Mammary epithelial cell (primary cell): ENCODE measurements at regions of chr15 and their contacts with region 1.

Region 1: GRCh38 chr15:33492434-33493052 is 181.8 kb downstream of the RYR3 start:
- DNase-seq: no peak
- H3K4me3 ChIP-seq: no peak overlapping the region
- H3K27ac ChIP-seq: no peak overlapping the region
- H3K4me1 ChIP-seq: peaks cover 1% of the 10 kb centered on the region
- H3K27me3 ChIP-seq: peaks cover 2% of the 10 kb centered on the region
- CTCF ChIP-seq: no peak

Region 2: DNA sequence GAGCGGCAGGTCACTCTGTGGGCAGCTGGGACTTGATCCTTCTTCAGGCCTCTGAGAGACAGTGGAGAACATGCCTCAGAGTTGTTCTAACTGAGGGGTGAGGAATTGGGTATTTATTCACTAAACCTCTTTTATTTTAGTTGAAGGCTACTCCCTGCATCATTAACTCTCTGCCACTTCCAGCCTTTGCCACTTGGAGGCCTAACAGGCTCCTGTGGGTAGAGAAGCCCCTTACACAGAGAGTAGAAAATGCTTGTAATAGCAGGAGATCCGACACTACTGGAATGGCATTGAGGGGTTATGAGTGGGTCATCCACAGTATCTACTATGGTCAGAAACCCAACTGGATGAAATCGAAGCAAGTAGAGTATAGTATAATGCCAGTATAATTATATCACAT is 100.1 kb before region 1 on chr15:
- CTCF ChIA-PET with region 1: no interaction called
- dilution Hi-C with region 1: loop called (anchors 5 kb)
- in situ Hi-C with region 1: no loop called
- intact Hi-C with region 1: no loop called
- DNase-seq: no peak
- H3K4me3 ChIP-seq: no peak overlapping the region
- H3K27ac ChIP-seq: no peak overlapping the region
- H3K4me1 ChIP-seq: no peaks in the 10 kb centered on the region
- H3K27me3 ChIP-seq: no peaks in the 10 kb centered on the region
- CTCF ChIP-seq: no peak

Region 3: DNA sequence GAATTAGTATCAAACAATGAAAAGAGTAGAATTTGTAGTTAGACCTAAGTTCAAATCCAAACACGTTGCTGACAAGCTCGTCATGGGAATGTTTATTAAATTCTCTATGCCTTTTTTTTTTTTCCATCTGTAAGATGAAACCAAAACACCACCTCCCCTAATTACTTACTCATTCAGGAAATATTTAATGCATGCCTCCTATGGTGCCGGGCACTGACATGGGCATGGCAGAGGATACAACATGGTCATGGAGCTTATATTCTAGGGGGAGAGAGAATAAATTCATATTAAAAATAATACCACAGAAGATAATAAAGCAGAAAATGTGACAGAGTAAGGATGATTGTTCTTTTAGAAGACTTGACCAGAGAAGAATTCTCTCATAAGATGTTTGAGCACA is 34.0 kb after region 1 on chr15:
- CTCF ChIA-PET with region 1: no interaction called
- dilution Hi-C with region 1: loop called (anchors 5 kb)
- in situ Hi-C with region 1: no loop called
- intact Hi-C with region 1: no loop called
- DNase-seq: no peak
- H3K4me3 ChIP-seq: no peak overlapping the region
- H3K27ac ChIP-seq: no peak overlapping the region
- H3K4me1 ChIP-seq: no peaks in the 10 kb centered on the region
- H3K27me3 ChIP-seq: no peaks in the 10 kb centered on the region
- CTCF ChIP-seq: no peak

Region 4: DNA sequence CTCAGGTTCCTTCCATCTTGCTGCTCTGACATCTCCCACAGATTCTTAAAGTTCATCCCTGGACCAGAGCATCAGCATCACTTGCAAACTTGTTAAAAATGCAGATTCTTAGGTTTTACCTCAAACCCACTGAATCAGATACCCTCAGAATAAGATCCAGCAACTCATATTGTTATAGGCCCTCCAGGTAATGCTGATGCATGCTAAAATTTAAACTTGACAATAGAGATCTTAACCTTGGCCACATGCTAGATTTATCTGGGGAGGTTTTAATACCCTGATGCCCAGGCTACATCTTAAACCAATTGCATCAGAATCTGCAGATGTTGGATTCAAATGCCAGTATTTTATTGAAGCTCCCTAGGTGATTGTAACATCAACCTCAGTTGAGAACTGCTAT is 75.1 kb after region 1 on chr15:
- CTCF ChIA-PET with region 1: no interaction called
- dilution Hi-C with region 1: no loop called
- in situ Hi-C with region 1: no loop called
- intact Hi-C with region 1: no loop called
- DNase-seq: no peak
- H3K4me3 ChIP-seq: no peak overlapping the region
- H3K27ac ChIP-seq: no peak overlapping the region
- H3K4me1 ChIP-seq: no peaks in the 10 kb centered on the region
- H3K27me3 ChIP-seq: no peaks in the 10 kb centered on the region
- CTCF ChIP-seq: no peak

Region 5: DNA sequence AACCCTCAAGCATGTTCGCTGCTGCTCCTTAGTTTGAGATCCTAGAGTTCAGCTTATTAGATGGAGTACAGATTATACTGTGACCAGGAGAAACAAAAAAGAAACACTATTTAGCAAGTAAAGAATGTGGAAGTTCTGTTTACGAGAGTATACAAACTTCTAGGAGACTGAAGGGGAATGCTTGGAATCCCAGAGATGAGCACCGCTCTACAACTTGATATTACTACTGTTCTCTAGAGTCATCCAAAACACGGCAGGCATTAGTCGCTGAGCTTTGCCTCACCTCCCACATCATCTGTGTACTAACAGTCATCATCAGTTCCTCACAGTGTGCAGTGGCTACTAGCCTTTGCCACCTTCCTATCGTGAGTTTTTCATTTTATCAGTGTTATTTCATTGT is 354.3 kb after region 1 on chr15:
- CTCF ChIA-PET with region 1: no interaction called
- dilution Hi-C with region 1: no loop called
- in situ Hi-C with region 1: no loop called
- intact Hi-C with region 1: no loop called
- DNase-seq: no peak
- H3K4me3 ChIP-seq: no peak overlapping the region
- H3K27ac ChIP-seq: no peak overlapping the region
- H3K4me1 ChIP-seq: no peaks in the 10 kb centered on the region
- H3K27me3 ChIP-seq: no peaks in the 10 kb centered on the region
- CTCF ChIP-seq: no peak